Motor neuron (in vitro differentiated cells): ENCODE measurements at regions of chr16 and their contacts with region 1.

Region 1: GRCh38 chr16:58661199-58661830 is 23.3 kb downstream of the SLC38A7 start:
- ATAC-seq: peak; percentile 94 to 100 (median 99)
- H3K4me3 ChIP-seq: no peak overlapping the region
- H3K27ac ChIP-seq: no peak overlapping the region
- H3K4me1 ChIP-seq: no peaks in the 10 kb centered on the region

Region 2: GRCh38 chr16:58306327-58306726 is 355.0 kb before region 1 on chr16:
- in situ Hi-C with region 1: loop called in 1 of 9 experiments (anchors 25 kb)
- ATAC-seq: peak in 3 of 8 experiments; percentile 38 to 48 (median 38)
- H3K4me3 ChIP-seq: no peak overlapping the region
- H3K27ac ChIP-seq: no peak overlapping the region
- H3K4me1 ChIP-seq: no peaks in the 10 kb centered on the region